SK-N-SH (cell line): ENCODE measurements at regions of chr12 and their contacts with region 1.

Region 1: GRCh38 chr12:51994959-51995358 is 11.8 kb upstream of the TAMALIN start:
- DNase-seq: no peak
- H3K4me3 ChIP-seq: no peak overlapping the region
- H3K27ac ChIP-seq: peak overlapping the region in 1 of 2 experiments; percentile 30; a peak in 2 of 4 replicates
- H3K4me1 ChIP-seq: peaks cover 3 to 6% of the 10 kb centered on the region in 2 experiments; a peak in 2 of 4 replicates
- H3K27me3 ChIP-seq: no peaks in the 10 kb centered on the region
- CTCF ChIP-seq: no peak
- EP300 ChIP-seq: no peak
- RAD21 ChIP-seq: no peak

Region 2: DNA sequence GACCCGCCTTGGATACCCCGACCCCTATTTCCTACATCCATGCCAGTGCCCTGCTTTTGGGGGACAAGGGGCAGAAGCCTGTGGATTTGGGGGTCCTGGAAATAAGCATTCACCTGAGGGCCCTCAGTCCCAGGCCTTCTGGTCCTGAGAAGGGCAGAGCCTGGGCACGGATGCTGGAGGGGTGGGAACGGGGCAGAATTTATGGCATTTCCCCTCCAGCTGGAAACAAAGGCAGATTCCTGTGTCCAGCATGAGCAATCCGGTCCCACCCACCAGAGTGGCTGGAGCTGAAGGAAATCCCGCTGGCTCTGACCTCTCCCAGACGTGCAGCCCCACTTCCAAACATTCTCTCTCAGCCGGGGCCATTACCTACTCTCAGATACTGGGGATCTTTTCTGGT is 97.8 kb before region 1 on chr12:
- CTCF ChIA-PET with region 1: interaction called, 22 read pairs
- POLR2A ChIA-PET with region 1: no interaction called
- DNase-seq: peak; percentile 12
- H3K4me3 ChIP-seq: no peak overlapping the region
- H3K27ac ChIP-seq: no peak overlapping the region
- H3K4me1 ChIP-seq: peaks cover 0 to 9% of the 10 kb centered on the region in 2 experiments; a peak in 1 of 4 replicates
- H3K27me3 ChIP-seq: no peaks in the 10 kb centered on the region
- CTCF ChIP-seq: no peak
- EP300 ChIP-seq: no peak
- RAD21 ChIP-seq: no peak

Region 3: GRCh38 chr12:51905471-51906429 is 89.2 kb before region 1 on chr12:
- CTCF ChIA-PET with region 1: interaction called, 14 read pairs
- POLR2A ChIA-PET with region 1: no interaction called
- DNase-seq: peak; percentile 61
- H3K4me3 ChIP-seq: no peak overlapping the region
- H3K27ac ChIP-seq: peak overlapping the region in 1 of 2 experiments; percentile 40; a peak in 2 of 4 replicates
- H3K4me1 ChIP-seq: peaks cover 0 to 28% of the 10 kb centered on the region in 2 experiments; a peak in 1 of 4 replicates
- H3K27me3 ChIP-seq: no peaks in the 10 kb centered on the region
- CTCF ChIP-seq: no peak
- EP300 ChIP-seq: no peak
- RAD21 ChIP-seq: no peak

Region 4: DNA sequence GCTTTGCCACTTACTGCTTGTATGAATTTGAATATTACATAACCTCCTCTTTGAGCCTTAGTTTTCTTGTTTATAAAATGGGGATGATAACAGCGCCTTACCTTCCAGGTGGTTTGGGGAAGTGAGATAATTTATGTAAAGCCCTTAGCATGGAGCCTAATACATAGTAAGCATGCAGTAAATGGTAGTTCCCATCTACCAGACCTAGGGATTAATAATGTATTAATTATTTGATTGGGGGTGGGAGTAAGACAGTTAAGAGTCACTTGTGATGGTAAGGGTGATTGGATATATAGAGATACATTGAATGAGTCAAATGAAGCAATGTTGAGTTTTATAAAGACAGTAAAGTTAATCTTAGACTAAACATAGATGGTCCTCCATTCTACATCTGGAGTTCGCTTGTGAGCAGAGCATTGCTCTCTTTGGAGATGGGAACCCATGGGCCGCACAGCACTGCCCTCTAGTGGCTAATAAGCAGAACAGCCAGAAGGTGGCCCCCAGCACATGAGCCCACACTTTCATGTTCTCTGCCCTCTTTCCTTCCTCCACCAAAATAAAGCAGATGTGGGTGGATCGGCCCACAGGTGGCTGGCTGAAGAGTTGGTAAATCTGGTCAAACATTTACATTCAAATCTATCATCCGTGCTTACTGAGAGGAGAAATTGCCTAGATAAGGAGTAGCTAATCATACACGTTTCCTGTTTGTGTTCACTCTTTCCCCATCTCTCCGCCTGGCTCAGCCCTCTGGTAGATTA is 14.7 kb before region 1 on chr12:
- CTCF ChIA-PET with region 1: interaction called, 18 read pairs
- POLR2A ChIA-PET with region 1: no interaction called
- DNase-seq: peak; percentile 85
- H3K4me3 ChIP-seq: peak overlapping the region in 1 of 2 experiments; percentile 26; a peak in 1 of 4 replicates
- H3K27ac ChIP-seq: peak overlapping the region in 1 of 2 experiments; percentile 8; a peak in 1 of 4 replicates
- H3K4me1 ChIP-seq: peaks cover 0 to under 1% of the 10 kb centered on the region in 2 experiments; a peak in 1 of 4 replicates
- H3K27me3 ChIP-seq: no peaks in the 10 kb centered on the region
- CTCF ChIP-seq: peak; percentile 97
- EP300 ChIP-seq: no peak
- RAD21 ChIP-seq: peak; percentile 97

Region 5: DNA sequence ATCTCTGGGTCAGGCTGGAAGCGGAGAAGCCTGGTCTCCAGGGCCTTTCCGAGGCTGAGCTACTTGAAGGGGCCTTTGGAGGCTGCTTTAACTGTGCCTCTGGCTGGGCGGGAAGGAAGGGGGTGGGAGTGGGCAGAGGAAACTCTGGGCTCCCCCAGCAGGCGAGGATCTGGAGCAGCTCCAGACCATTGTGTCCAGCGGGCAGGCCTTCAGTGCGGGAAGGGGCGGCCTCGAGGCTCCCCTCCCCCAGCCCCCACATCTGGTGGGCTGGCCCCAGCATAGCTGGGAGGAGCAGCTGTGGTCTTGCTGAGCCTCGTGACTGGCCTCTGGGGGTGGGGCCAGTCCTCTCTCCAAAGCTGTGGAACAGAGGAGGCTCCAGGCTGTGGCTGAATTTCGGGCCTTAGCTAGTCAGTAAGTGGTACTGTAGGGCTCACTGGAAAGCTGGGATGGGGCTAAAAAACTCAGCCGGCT is 15.2 kb after region 1 on chr12:
- CTCF ChIA-PET with region 1: interaction called, 608 read pairs
- POLR2A ChIA-PET with region 1: no interaction called
- DNase-seq: peak; percentile 88
- H3K4me3 ChIP-seq: no peak overlapping the region
- H3K27ac ChIP-seq: peak overlapping the region; percentile 19 to 71; a peak in 3 of 4 replicates
- H3K4me1 ChIP-seq: peaks cover 0 to 32% of the 10 kb centered on the region in 2 experiments; a peak in 2 of 4 replicates
- H3K27me3 ChIP-seq: no peaks in the 10 kb centered on the region
- CTCF ChIP-seq: no peak
- EP300 ChIP-seq: no peak
- RAD21 ChIP-seq: no peak

Region 6: DNA sequence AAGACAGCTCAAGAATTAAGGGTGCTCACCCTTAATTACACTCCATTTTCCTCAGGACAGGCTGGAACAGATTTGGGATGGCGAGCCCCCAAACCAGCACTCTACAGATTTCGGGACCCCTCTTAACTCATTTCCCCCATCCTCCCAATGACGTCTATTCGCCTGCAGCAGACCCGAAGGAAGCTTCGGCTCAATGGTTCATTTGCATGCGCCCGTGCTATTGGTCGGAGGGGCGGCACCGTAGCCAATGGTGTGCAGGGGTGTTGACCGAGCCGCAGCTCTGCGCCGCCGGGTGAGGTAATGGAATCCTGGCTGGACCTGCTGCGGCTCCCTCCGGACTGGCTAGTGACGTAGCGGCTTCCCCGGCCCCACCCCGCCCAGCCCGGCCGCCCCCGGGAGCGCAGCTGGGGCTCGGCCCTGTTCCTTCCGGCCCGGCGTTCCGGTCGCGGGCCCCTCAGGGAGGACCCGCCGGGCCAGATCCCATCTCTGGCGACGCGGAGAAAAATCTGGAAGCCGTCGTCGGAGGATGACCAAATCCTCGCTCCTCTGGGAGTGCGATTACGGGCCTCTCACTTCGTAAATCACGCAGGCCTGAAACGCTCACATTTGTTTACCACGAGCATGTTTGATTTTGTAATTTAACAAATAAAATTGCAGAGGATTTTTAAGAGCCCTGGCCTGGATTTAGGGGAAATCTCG is 38.0 kb after region 1 on chr12:
- CTCF ChIA-PET with region 1: interaction called, 608 read pairs
- POLR2A ChIA-PET with region 1: no interaction called
- DNase-seq: peak; percentile 96
- H3K4me3 ChIP-seq: peak overlapping the region; percentile 46 to 53
- H3K27ac ChIP-seq: peak overlapping the region; percentile 82 to 94
- H3K4me1 ChIP-seq: peaks cover 0 to 27% of the 10 kb centered on the region in 2 experiments; a peak in 2 of 4 replicates
- H3K27me3 ChIP-seq: no peaks in the 10 kb centered on the region
- CTCF ChIP-seq: no peak
- EP300 ChIP-seq: no peak
- RAD21 ChIP-seq: no peak

Region 7: DNA sequence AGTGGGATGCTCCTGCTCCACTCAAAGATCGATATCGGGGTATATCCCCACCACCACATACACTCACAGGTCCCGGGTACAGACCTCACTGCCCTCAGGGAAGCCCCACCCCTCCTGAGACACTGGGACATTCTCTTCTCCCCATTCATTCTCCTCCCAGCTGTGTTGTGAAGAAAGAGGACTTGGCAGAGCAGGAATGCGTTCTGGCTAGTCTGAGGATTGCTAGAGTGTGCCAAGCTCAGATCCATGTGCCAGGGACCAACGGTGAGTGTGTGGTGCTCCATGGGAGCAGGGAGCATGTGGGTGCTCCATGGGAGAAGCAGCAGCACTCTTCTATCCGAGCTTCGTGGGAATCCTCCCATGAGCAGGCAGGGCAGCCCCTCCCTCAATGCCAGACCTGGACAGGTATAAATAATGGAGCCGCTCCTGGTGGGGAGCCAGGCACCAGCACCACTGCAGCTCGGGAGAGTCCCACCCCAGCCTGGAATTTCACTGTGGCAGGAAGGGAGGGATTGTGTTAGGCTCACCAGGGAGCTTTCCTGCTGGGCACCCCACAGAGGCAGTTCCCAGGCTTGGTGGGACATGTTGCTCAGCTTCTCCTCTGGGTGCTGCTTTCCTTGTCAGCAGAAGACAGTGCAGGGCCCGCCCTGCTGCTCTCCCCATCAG is 527.5 kb after region 1 on chr12:
- CTCF ChIA-PET with region 1: no interaction called
- POLR2A ChIA-PET with region 1: no interaction called
- DNase-seq: no peak
- H3K4me3 ChIP-seq: no peak overlapping the region
- H3K27ac ChIP-seq: no peak overlapping the region
- H3K4me1 ChIP-seq: no peaks in the 10 kb centered on the region
- H3K27me3 ChIP-seq: peaks cover 41% of the 10 kb centered on the region; the same call in 1 of the 2 replicates
- CTCF ChIP-seq: no peak
- EP300 ChIP-seq: no peak
- RAD21 ChIP-seq: no peak